Thyroid gland (tissue), 4 donors: ENCODE measurements at regions of chr5 and their contacts with region 1.

Region 1: GRCh38 chr5:45521067-45521466 is 175.1 kb downstream of the HCN1 start:
- DNase-seq: peak; percentile 56 to 74
- H3K4me3 ChIP-seq: no peak overlapping the region
- H3K27ac ChIP-seq: no peak overlapping the region
- H3K4me1 ChIP-seq: no peaks in the 10 kb centered on the region
- H3K27me3 ChIP-seq: no peaks in the 10 kb centered on the region
- CTCF ChIP-seq: peak in 5 of 6 experiments; percentile 14 to 73 (median 53)
- POLR2A ChIP-seq: no peak

Region 2: DNA sequence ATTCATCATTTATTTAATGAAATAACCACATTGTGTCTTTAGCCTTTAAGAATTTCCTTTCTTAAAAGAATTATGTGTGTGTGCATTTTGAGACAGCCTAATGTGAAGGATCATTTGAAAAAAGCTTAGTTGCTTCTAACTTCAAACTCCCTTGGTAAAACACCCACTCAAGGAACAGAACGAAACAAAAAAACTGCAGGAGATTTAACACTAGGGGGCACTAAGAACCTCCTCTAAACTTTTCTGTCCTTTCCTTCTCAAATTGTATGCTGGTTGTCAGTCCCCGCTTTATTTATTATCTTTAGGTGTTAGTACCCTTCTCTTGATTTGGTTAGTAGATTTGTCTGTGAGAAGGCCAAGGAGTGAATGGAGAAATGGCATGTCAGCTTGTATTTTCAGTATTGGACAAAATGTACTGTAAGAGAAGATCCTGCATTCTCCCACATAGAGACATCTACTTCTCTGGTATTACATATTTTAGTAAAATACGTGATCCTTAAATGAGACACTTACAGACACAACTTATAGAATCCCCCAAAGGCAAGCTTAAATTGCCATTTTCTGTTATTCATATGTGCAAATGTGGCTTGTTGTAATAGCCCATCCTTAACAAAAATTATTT is 482.6 kb before region 1 on chr5:
- intact Hi-C with region 1: loop called (anchors 10 kb)
- DNase-seq: no peak
- H3K4me3 ChIP-seq: no peak overlapping the region
- H3K27ac ChIP-seq: no peak overlapping the region
- H3K4me1 ChIP-seq: no peaks in the 10 kb centered on the region
- H3K27me3 ChIP-seq: no peaks in the 10 kb centered on the region
- CTCF ChIP-seq: peak in 5 of 6 experiments; percentile 32 to 68 (median 63)
- POLR2A ChIP-seq: no peak